ACHN (cell line): ENCODE measurements at regions of chr17 and their contacts with region 1.

Region 1: DNA sequence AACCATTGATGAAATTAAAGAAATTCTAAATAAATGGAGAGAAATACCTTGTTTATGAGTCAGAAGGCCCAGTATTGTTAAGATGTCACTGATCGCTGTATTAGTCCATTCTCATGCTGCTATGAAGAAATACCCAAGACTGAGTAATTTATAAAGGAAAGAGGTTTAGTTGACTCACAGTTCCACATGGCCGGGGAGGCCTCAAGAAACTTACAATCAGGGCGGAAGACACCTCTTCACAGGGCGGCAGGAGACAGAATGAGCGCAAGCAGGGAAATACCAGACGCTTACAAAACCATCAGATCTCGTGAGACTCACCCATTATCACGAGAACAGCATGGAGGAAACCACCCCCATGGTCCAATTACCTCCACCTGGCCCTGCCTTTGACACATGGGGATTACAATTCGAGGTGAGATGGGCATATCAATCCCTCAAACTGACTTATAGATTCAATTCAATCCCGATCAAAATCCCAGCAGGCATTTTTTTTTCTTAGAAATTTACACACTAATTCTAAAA is 157.2 kb downstream of the ENGASE start:
- DNase-seq: no peak

Region 2: DNA sequence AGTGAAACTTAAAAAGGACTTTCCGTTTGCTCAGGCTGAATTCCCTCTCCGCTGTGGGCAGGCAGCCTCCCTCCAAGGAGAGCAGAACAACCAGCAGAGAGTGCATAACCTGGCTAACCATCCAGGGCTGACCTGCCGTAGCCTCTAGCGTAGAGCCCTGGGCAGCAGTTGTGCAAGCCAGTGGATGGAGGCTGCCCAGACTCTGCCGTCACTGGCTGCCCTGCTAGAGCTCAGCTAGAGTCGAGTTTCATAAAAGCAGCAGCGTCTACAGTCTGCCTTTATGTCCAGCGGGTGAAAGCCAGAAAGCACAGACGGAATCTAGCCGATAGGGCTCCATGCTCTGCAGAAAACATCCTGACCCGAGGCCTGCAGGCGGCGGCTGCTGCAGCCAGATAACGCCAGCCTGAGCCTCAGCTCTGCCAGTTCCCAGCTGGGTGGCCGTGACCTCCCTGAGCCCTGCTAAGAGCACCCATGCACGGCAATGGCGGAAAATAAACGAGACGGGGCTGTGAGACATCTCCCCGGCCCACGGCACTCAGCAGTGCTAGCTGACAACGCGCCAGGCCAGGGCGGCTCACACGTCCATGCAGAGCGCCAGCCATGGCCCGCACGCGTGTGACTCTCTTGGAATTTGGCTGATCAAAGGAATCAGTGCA is 74.1 kb after region 1 on chr17:
- in situ Hi-C with region 1: loop called (anchors 5 kb)
- DNase-seq: peak; percentile 73